ENCODE measurements at regions of chr21 and their contacts with region 1.

Region 1: DNA sequence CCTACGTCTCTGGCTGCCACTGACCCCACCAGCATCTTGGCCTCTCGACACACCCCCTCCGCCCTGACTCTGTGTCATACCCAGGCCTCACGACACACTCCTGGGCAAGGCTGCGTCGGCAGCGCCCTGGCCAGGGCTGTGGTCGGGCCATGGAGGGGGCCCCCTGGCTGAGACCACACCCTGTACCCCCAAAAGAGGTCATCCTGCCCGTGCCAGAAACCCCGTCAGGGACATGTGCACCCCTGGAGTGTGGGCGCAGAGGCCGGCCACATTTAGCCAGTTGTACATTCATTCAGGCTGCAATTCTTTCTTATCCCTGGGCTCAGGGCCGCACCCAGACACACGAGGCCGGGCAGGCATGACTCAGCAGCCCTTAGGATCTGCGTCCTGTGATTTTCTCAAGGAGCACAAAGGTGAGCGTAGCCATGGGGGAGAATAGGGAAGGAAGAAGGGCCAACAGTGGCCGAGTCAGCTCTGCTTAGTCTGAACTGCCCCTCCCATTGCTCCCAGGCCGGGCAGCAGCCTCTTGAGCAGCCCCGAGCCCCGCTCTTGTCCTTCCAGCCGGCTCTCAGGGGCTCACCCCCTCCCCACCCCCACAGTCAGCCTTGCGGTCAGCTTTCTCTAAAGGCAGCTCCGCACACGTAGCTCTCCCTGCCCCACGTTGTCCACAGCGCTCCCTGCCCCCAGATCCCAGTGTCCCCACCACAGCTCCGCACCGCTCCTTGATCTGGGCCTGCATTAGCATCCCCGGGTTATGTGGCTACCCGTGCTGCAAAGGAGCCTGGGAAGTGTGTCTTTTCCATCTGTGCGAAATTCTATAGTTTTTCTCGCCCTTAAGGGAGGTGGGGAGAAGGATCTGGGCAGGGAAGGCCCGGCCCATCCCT is 7.9 kb downstream of the CSTB start:
- DNase-seq: no peak
- H3K4me3 ChIP-seq: no peak overlapping the region
- H3K27ac ChIP-seq: no peak overlapping the region
- H3K4me1 ChIP-seq: peaks cover 8% of the 10 kb centered on the region
- H3K27me3 ChIP-seq: no peaks in the 10 kb centered on the region
- CTCF ChIP-seq: no peak

Region 2: DNA sequence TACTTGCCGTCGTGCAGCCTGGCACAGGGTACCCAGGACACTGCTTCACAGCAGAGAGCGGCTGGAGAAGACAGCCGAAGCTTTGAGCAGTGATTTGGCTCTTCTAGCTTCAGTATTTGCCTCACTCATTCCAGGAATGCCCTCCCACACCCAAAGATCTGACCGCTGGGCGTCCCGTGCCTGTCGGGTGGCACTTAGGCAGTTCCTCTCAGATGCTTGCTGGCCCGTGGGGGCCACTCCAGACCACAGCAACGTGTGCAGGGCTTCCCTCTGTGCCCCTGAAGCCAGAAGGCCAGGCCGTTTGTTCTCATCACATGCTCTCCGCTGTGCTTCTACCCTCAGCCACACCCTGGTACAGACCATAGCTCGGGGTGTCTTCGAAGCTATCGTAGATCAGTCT is 91.8 kb before region 1 on chr21:
- intact Hi-C with region 1: loop called (anchors 10 kb)
- DNase-seq: no peak
- H3K4me3 ChIP-seq: no peak overlapping the region
- H3K27ac ChIP-seq: no peak overlapping the region
- H3K4me1 ChIP-seq: no peaks in the 10 kb centered on the region
- H3K27me3 ChIP-seq: no peaks in the 10 kb centered on the region
- CTCF ChIP-seq: no peak

Measured in left ventricle myocardium inferior (tissue), 1 donor.